ENCODE measurements at regions of chr7 and their contacts with region 1.

Region 1: DNA sequence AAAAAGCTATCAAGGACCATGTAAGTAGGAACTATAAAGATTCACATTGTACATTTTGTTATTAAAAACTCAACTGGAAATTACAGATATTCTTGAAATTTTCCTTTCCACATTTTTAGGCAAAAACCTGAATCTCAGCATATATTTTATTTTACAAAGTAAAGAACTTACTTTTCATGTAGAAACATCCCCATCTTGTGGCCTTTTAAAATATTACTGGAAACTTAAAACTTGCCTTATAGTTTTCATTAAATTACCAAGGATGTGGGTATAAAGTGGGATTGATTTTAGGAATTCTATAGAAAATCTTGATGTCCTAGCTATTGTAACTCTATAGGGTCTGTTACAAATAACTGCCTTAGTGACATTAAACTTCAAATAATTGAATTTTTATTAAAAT is 10.6 kb downstream of the DBF4 start:
- DNase-seq: no peak
- ATAC-seq: no peak
- H3K4me3 ChIP-seq: no peak overlapping the region
- H3K27ac ChIP-seq: no peak overlapping the region
- H3K4me1 ChIP-seq: no peaks in the 10 kb centered on the region
- H3K27me3 ChIP-seq: no peaks in the 10 kb centered on the region
- CTCF ChIP-seq: peak in 8 of 9 donors; percentile 18 to 65 (median 54)

Region 2: DNA sequence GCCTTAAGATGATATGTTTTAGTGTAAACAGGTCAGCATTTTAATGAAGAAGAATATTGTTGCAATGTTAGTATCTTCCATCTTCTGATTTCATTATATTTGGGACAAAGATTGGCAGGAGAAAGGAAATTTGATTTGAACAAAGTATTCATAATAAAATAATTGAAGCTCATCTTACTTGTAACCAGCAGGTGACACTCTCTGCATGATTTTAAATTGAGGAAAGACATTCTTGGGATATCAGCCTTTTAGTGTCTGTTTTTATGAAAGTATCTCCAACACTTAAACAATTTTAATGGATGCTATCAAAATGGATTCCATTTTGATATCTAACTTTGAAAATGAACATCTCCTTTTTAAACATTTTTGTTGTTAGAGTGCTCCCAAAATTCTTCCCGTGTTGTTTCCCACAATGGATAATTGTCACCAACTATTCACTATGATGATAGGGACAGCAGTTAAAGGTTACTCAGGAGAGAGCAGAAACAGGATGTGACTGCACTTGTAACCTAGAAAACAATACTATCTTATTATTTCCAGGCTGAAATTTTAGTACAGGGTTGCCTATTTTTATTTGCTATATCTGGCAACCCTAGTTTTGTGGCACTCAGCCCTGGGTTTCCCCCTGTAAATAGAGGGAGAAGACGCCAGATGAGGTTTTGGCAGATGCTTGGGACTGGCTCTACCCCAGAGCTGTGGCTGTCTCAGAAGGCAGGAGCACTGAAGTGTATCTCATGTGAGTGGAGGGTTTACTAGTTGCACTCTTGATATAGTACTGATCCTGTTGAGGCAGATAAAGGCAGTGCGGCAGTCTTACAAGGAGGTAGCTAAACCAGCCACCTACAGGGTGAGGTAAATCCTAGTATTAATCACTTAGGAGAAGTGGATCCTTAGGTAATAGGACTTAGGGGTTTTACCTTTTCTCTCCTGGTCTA is 380.4 kb before region 1 on chr7:
- intact Hi-C with region 1: loop called in 7 of 10 experiments (anchors 5 to 10 kb)
- DNase-seq: no peak
- ATAC-seq: peak in 1 of 8 donors; percentile 22
- H3K4me3 ChIP-seq: no peak overlapping the region
- H3K27ac ChIP-seq: no peak overlapping the region
- H3K4me1 ChIP-seq: peaks cover 0 to 9% (median 0%) of the 10 kb centered on the region in 9 donors
- H3K27me3 ChIP-seq: no peaks in the 10 kb centered on the region
- CTCF ChIP-seq: peak in 8 of 9 donors; percentile 23 to 67 (median 52)

Measured in heart right ventricle (tissue), 16 donors.